Endothelial cell of umbilical vein (primary cell): ENCODE measurements at regions of chr10 and their contacts with region 1.

Region 1: DNA sequence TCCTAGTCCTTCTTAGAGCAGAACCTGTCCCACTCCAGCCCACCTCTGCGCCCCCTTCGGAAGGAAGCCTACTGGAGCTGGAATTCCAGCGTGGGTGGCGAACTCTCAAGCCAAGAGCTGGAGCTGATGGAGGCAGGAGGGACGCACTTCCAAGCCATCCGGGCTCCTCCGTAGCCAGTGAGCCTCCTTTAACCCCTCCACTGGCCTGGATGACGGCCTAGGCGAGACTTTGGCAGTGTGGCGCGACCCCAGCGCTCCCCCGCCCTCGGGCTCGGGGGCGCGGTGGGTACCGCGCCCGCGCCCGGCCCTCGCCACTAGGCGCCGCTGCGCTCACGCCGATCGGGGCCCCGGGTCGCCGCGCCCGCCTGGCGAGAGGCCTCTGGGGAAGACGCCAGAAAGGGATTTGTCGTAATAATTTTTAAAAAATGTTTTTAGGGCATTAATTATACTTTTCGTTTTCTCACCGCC is 5.1 kb upstream of the EMX2 start:
- DNase-seq: no peak
- H3K4me3 ChIP-seq: no peak overlapping the region
- H3K27ac ChIP-seq: no peak overlapping the region
- H3K4me1 ChIP-seq: peaks cover 2% of the 10 kb centered on the region
- H3K27me3 ChIP-seq: peaks cover 85 to 95% of the 10 kb centered on the region in 2 experiments
- CTCF ChIP-seq: peak; percentile 57 to 81
- POLR2A ChIP-seq: no peak

Region 2: GRCh38 chr10:117461766-117462423 is 75.6 kb before region 1 on chr10:
- CTCF ChIA-PET with region 1: no interaction called
- POLR2A ChIA-PET with region 1: no interaction called
- dilution Hi-C with region 1: no loop called
- intact Hi-C with region 1: loop called (anchors 5 kb)
- DNase-seq: peak; percentile 95
- H3K4me3 ChIP-seq: no peak overlapping the region
- H3K27ac ChIP-seq: peak overlapping the region; percentile 89
- H3K4me1 ChIP-seq: peaks cover 38% of the 10 kb centered on the region
- H3K27me3 ChIP-seq: no peaks in the 10 kb centered on the region
- CTCF ChIP-seq: no peak
- POLR2A ChIP-seq: no peak

Region 3: DNA sequence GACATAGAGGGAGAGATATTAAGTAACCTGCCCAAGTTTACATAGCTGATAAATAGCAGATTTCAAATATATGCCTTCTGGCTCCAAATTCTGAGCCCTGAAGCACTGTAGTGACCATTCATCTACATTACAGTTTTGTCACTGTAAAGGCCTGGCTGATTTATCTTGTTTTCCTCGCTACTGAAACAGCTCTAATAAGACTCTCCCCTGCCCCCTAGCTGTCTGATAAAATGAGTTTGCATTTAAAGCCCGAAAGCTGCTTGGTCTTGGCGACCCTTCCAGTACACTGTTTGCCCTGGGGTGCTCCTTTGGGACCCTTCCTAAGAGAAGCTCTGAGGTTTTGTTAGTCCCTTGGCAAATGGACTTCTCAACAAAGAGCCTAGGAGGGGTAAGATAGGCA is 569.0 kb after region 1 on chr10:
- CTCF ChIA-PET with region 1: interaction called, 24 read pairs
- POLR2A ChIA-PET with region 1: no interaction called
- dilution Hi-C with region 1: no loop called
- intact Hi-C with region 1: loop called (anchors 1 kb)
- DNase-seq: peak; percentile 42
- H3K4me3 ChIP-seq: no peak overlapping the region
- H3K27ac ChIP-seq: no peak overlapping the region
- H3K4me1 ChIP-seq: no peaks in the 10 kb centered on the region
- H3K27me3 ChIP-seq: no peaks in the 10 kb centered on the region
- CTCF ChIP-seq: peak in 1 of 2 donors; percentile 28
- POLR2A ChIP-seq: no peak

Region 4: DNA sequence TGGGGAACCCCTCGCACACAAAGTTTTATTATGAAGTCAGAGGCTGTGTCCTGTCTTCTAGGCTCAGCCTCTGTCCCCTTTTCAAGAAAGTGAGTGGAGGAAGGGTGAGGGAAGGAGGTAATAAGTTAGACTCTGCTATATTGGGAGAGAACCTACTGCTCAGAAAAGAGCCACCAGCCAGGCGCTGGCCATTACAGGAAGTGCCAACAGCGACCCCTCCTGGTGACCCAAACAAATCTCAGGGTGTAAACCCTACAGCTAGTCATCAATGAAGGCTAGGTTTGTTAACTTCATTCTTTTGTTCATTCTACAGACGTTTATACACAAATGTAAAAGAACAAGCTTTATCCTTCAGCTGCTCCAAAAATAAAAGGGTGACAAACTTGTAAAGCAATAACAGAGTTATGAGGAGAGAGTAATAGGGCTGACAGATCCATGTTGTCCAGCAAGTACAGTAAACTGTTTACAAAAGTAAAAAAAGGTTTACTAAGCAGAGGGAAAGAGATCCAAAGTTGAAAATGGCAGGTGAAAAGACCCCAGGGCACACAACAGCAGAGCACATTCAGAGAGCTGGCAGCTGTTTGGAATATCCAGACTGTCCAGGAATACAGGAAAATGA is 721.9 kb after region 1 on chr10:
- CTCF ChIA-PET with region 1: interaction called, 10 read pairs
- POLR2A ChIA-PET with region 1: no interaction called
- dilution Hi-C with region 1: no loop called
- intact Hi-C with region 1: no loop called
- DNase-seq: no peak
- H3K4me3 ChIP-seq: no peak overlapping the region
- H3K27ac ChIP-seq: no peak overlapping the region
- H3K4me1 ChIP-seq: no peaks in the 10 kb centered on the region
- H3K27me3 ChIP-seq: peaks cover 7 to 8% of the 10 kb centered on the region in 2 experiments
- CTCF ChIP-seq: peak; percentile 45 to 46
- POLR2A ChIP-seq: no peak

Region 5: GRCh38 chr10:118423800-118424479 is 886.5 kb after region 1 on chr10:
- CTCF ChIA-PET with region 1: interaction called, 12 read pairs
- POLR2A ChIA-PET with region 1: no interaction called
- dilution Hi-C with region 1: no loop called
- intact Hi-C with region 1: loop called (anchors 1 kb)
- DNase-seq: peak; percentile 75
- H3K4me3 ChIP-seq: no peak overlapping the region
- H3K27ac ChIP-seq: no peak overlapping the region
- H3K4me1 ChIP-seq: no peaks in the 10 kb centered on the region
- H3K27me3 ChIP-seq: no peaks in the 10 kb centered on the region
- CTCF ChIP-seq: peak; percentile 62 to 78
- POLR2A ChIP-seq: no peak